Posterior vena cava (tissue), 2 donors: ENCODE measurements at regions of chr5 and their contacts with region 1.

Region 1: DNA sequence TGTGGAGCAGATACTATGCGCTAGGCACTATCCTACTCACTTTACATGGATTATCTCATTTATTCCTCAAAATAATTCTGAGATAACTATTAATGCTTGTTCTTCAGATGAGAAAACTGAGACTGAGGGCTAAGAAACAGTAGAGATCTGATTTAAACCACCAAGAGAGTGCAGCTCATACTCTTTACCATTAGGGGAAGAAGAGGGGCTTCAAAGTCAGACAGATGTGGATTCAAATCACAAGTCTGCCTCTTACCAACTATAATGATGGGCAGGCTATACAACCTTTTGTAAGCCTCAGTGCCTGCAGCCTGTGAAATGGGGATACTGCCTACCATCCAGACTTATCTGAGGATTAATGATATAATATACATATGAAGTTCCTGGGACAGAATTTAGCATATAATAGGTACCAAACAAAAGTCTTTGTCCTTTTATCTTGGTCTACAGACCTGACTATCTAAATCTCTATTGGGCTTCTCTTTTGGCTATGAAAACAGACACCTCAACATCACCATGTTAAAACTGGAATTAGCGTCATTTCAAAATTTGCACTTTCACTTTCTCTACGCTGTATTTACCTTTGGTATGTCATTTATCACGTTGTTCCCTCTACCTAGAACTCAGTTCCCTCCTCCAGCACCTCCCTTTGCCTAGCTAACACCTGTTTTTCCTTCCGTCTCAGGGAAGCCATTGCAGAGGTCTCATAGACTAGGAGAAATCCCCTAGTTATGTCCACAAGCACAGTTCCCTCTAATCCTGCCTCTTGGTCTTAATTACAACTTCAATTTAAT is 13.8 kb upstream of the TMEM267 start:
- DNase-seq: no peak

Region 2: GRCh38 chr5:41763081-41763480 is 1734.4 kb before region 1 on chr5:
- intact Hi-C with region 1: loop called in 1 of 2 experiments (anchors 10 kb)
- DNase-seq: no peak